Naive thymus-derived CD4-positive, alpha-beta T cell (primary cell): ENCODE measurements at regions of chr2 and their contacts with region 1.

Region 1: DNA sequence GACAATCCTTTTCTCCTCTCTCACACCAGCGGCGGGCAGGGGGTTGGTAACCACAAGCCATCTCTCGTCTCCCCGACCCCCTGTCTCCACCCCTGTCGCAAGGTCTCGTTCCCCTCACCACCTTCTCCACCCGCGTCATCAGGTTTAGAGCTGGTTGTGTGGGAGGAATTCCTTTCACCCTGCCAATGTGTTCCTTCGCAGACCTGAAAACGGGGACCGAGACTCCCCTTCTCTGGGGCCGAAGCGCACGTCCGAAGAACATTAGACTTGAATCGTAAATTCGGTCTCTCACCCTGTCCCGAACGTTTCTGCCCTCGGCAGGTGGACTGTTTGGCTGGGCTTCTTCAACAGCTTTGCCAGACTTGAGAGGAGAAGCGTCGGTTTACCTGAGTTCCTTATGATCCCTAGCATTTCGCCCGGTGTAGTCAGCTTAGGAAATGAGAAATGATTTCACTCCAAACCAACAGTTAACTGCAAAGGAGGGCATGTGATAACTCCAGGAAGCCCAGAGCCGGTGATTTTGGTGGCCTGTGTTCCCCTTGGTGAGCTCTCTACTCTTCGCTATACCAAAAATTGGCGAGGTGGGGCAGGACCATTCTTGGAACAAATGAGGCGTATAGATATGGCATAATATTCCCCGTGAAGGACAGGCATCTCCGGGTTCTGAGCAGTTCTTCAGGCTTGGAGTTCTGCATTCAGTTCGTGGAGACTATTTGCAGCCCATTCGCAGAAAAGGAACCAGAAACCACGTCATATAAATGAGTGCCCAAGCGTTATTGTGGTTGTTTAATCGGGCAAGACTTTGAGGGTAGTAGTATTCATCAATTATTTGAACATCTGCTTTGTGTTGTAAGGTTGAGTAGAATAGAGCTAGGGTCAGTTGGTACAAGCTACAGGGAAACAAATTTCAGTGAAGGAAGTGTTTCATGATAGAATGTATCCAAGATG is 694 bp downstream of the CFAP36 start:
- DNase-seq: peak in 4 of 9 donors; percentile 23 to 58 (median 26)
- ATAC-seq: peak; percentile 31
- H3K4me3 ChIP-seq: peak overlapping the region; percentile 80
- H3K4me3 Mint-ChIP-seq: peak overlapping the region; percentile 89 to 99 (median 98)
- H3K27ac ChIP-seq: peak overlapping the region; percentile 90
- H3K27ac Mint-ChIP-seq: peak overlapping the region; percentile 96 to 100 (median 100)
- H3K4me1 ChIP-seq: peaks cover 0 to 5% of the 10 kb centered on the region in 2 donors
- H3K4me1 Mint-ChIP-seq: peaks cover 5 to 28% (median 16%) of the 10 kb centered on the region in 7 donors
- H3K27me3 ChIP-seq: no peaks in the 10 kb centered on the region
- H3K27me3 Mint-ChIP-seq: no peaks in the 10 kb centered on the region

Region 2: GRCh38 chr2:53970724-53971602 is 1549.2 kb before region 1 on chr2 and contains the start of gene PSME4:
- CTCF ChIA-PET with region 1: no interaction called
- POLR2A ChIA-PET with region 1: no interaction called
- intact Hi-C with region 1: loop called in 1 of 2 experiments (anchors 2 kb)
- DNase-seq: peak; percentile 80 to 95 (median 90)
- ATAC-seq: peak; percentile 97
- H3K4me3 ChIP-seq: peak within 1 kb of the TSS; percentile 84
- H3K4me3 Mint-ChIP-seq: peak within 1 kb of the TSS; percentile 89 to 100 (median 96)
- H3K27ac ChIP-seq: peak within 1 kb of the TSS; percentile 93
- H3K27ac Mint-ChIP-seq: peak within 1 kb of the TSS; percentile 91 to 99 (median 95)
- H3K4me1 ChIP-seq: peaks cover 17 to 21% of the 10 kb centered on the region in 2 donors
- H3K4me1 Mint-ChIP-seq: peaks cover 37 to 65% (median 54%) of the 10 kb centered on the region in 7 donors
- H3K27me3 ChIP-seq: no peaks in the 10 kb centered on the region
- H3K27me3 Mint-ChIP-seq: no peaks in the 10 kb centered on the region
- total RNA-seq, gene PSME4: 48.8 to 80.1 (median 54.4) TPM

Region 3: DNA sequence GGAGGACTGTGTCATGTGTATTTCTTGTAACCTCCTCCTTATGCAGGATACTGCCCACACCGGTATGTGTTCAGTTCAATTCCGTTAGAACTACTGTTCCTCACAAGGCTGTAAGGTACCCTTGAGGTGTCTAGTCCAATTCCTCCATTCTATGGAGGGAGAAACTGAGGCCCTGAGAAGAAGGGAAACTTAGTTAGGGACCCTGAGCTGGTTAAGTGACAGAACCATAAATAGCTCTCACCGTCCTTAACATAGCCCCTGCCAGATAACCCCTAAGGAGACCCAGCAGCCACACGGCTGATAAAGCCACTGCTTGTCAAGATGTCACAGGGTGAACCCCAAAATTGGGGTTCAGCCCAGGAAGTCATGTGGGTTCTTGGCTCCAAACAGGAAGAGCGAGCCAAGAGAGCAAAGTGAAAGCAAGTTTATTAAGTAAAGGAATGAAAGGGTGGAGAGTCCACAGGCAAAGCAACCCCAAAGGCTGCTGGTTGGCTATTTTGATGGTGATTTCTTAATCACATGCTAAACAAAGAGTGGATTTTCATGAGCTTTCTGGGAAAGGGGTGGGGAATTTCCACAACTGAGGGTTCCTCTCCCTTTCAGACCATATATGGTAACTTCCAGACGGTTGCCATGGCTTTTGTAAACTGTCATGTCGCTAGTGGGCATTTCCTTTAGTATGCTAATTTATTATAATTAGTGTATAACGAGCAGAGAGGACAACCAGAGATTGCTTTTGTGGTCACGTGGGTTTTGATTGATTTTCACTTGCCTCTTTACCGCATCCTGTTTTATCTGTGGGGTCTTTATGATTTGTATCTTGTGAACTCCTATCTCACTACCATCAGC is 386.5 kb before region 1 on chr2:
- CTCF ChIA-PET with region 1: interaction called, 3 read pairs
- POLR2A ChIA-PET with region 1: no interaction called
- intact Hi-C with region 1: loop called in 1 of 2 experiments (anchors 5 kb)
- DNase-seq: peak; percentile 17 to 78 (median 52)
- ATAC-seq: peak; percentile 91
- H3K4me3 ChIP-seq: peak overlapping the region; percentile 55
- H3K4me3 Mint-ChIP-seq: peak overlapping the region; percentile 83 to 94 (median 88)
- H3K27ac ChIP-seq: peak overlapping the region; percentile 76
- H3K27ac Mint-ChIP-seq: peak overlapping the region; percentile 91 to 98 (median 97)
- H3K4me1 ChIP-seq: peaks cover 14 to 22% of the 10 kb centered on the region in 2 donors
- H3K4me1 Mint-ChIP-seq: peaks cover 19 to 49% (median 39%) of the 10 kb centered on the region in 7 donors
- H3K27me3 ChIP-seq: no peaks in the 10 kb centered on the region
- H3K27me3 Mint-ChIP-seq: no peaks in the 10 kb centered on the region

Region 4: GRCh38 chr2:55282110-55282917 is 237.9 kb before region 1 on chr2:
- CTCF ChIA-PET with region 1: no interaction called
- POLR2A ChIA-PET with region 1: interaction called, 5 read pairs
- intact Hi-C with region 1: loop called (anchors 1 kb)
- DNase-seq: peak; percentile 78 to 87 (median 83)
- ATAC-seq: peak; percentile 99
- H3K4me3 ChIP-seq: peak overlapping the region; percentile 80
- H3K4me3 Mint-ChIP-seq: peak overlapping the region; percentile 87 to 97 (median 92)
- H3K27ac ChIP-seq: peak overlapping the region; percentile 93
- H3K27ac Mint-ChIP-seq: peak overlapping the region; percentile 94 to 99 (median 98)
- H3K4me1 ChIP-seq: peaks cover 0 to 4% of the 10 kb centered on the region in 2 donors
- H3K4me1 Mint-ChIP-seq: peaks cover 11 to 43% (median 29%) of the 10 kb centered on the region in 7 donors
- H3K27me3 ChIP-seq: no peaks in the 10 kb centered on the region
- H3K27me3 Mint-ChIP-seq: peaks cover 0 to 2% (median 0%) of the 10 kb centered on the region in 5 donors

Region 5: GRCh38 chr2:55555977-55556376 is 35.8 kb after region 1 on chr2:
- CTCF ChIA-PET with region 1: no interaction called
- POLR2A ChIA-PET with region 1: interaction called, 4 read pairs
- intact Hi-C with region 1: loop called in 1 of 2 experiments (anchors 5 kb)
- DNase-seq: no peak
- ATAC-seq: no peak
- H3K4me3 ChIP-seq: no peak overlapping the region
- H3K4me3 Mint-ChIP-seq: no peak overlapping the region
- H3K27ac ChIP-seq: no peak overlapping the region
- H3K27ac Mint-ChIP-seq: peak overlapping the region in 3 of 9 donors; percentile 24 to 82 (median 47)
- H3K4me1 ChIP-seq: no peaks in the 10 kb centered on the region
- H3K4me1 Mint-ChIP-seq: peaks cover 4 to 23% (median 11%) of the 10 kb centered on the region in 7 donors
- H3K27me3 ChIP-seq: no peaks in the 10 kb centered on the region
- H3K27me3 Mint-ChIP-seq: no peaks in the 10 kb centered on the region

Region 6: DNA sequence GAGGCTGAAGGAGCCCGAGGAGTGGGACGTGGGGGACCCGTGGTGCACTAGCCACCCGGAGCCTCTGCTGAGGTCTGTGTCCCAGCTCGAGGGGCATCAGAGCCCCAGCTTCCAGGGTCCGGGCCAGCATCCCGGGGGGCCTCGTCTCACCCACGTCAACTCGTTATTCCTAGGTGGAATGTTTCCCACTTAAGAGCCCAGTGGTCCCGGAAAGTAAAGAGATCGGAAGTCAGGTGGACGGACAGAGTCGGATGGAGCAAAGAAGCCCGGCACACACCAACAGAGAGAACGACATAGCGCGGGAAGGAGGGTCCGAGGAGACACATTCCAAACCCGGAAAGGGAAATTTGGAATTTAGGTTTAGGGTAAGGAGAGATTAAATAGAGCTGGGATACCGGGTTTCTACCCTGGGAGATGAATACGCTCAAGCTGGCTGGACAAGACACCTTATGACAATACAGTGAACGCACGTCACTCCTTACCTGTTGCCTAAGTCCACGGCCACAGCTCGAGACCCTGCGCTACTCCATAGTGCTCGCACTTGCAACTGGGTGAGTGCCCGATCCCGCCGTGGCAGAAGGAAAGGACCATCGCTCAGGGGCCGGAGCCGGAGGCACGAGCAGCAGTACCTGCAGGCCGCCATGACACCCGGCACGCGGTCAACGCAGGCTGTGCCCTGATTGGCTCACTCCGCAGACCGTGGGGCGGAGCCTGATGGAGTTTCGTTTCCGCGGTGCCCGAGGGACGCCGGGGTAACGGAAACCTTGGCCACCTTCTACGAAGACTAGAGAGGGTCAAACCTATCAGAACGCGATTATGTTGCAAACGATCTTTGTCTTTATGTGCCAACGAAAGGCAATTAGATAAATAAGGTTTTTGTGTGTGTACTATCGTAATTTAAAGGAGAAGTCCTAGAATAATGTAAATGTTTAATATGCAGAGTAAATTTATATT is 173.2 kb after region 1 on chr2 and contains the start of gene PNPT1:
- CTCF ChIA-PET with region 1: no interaction called
- POLR2A ChIA-PET with region 1: no interaction called
- intact Hi-C with region 1: loop called (anchors 1 kb)
- DNase-seq: peak; percentile 78 to 92 (median 90)
- ATAC-seq: peak; percentile 100
- H3K4me3 ChIP-seq: peak within 1 kb of the TSS; percentile 90
- H3K4me3 Mint-ChIP-seq: peak within 1 kb of the TSS; percentile 94 to 99 (median 97)
- H3K27ac ChIP-seq: peak within 1 kb of the TSS; percentile 72
- H3K27ac Mint-ChIP-seq: peak within 1 kb of the TSS; percentile 92 to 99 (median 96)
- H3K4me1 ChIP-seq: peaks cover 0 to 6% of the 10 kb centered on the region in 2 donors
- H3K4me1 Mint-ChIP-seq: peaks cover 18 to 50% (median 43%) of the 10 kb centered on the region in 7 donors
- H3K27me3 ChIP-seq: no peaks in the 10 kb centered on the region
- H3K27me3 Mint-ChIP-seq: peaks cover 0 to 6% (median 3%) of the 10 kb centered on the region in 5 donors
- total RNA-seq, gene PNPT1: 16.9 to 31.2 (median 18.5) TPM